ENCODE measurements at regions of chr7 and their contacts with region 1.

Region 1: GRCh38 chr7:85796956-85797355 is 610.1 kb upstream of the SEMA3D start:
- DNase-seq: no peak
- ATAC-seq: no peak
- H3K4me3 ChIP-seq: no peak overlapping the region
- H3K27ac ChIP-seq: no peak overlapping the region
- H3K4me1 ChIP-seq: no peaks in the 10 kb centered on the region
- H3K27me3 ChIP-seq: no peaks in the 10 kb centered on the region
- CTCF ChIP-seq: no peak

Region 2: DNA sequence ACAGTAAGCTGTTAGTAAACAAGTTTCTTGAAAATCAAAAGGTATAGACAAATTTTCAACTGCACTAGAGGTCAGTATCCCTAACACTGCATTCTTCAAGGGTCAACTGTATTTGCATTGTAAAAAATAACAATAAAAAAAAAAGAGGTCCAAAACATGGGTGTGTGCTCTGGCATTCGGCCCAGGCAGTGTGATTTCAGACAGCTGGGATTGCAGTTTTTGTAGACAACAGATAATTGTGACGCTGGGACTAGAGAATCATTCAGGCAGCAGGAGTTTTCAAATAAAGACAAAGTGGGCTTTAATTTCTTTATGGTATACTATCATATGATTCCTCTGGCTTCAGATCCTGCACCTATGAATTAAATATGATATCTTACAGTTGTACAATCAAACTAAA is 66.9 kb before region 1 on chr7:
- CTCF ChIA-PET with region 1: no interaction called
- POLR2A ChIA-PET with region 1: no interaction called
- in situ Hi-C with region 1: no loop called
- intact Hi-C with region 1: loop called (anchors 10 kb)
- DNase-seq: no peak
- ATAC-seq: no peak
- H3K4me3 ChIP-seq: no peak overlapping the region
- H3K27ac ChIP-seq: no peak overlapping the region
- H3K4me1 ChIP-seq: no peaks in the 10 kb centered on the region
- H3K27me3 ChIP-seq: no peaks in the 10 kb centered on the region
- CTCF ChIP-seq: no peak

Region 3: DNA sequence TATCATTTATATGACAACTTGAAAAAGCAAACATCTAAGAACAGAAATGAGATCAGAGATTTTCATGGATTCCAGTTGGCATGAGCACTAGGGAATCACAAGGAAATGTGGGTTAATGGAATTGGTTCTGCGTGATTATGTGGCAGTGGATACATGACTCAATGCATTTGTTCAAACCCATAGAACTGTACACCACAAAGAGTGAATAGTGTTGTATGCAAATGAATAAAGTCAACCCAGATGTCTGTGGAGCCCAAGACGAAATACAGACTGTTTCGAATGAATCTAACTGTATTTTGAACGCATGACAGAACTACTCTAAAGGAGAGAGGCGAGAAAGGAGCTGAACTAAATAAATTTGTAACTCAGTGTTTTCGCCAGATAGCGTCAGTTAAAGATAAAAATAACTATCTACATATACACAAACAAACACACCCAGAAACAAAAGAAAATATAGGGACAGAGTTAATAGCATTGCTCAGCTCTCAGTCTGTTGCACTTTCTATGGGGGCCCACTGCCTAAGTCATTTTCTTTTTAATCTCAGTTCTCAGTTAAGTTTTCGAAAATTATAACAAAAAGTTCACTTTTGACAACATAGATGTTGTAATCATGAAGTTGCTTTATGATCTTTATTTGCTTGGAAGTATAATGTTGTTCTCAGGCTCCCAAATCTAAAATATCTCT is 26.6 kb after region 1 on chr7:
- CTCF ChIA-PET with region 1: no interaction called
- POLR2A ChIA-PET with region 1: no interaction called
- in situ Hi-C with region 1: no loop called
- intact Hi-C with region 1: no loop called
- DNase-seq: no peak
- ATAC-seq: no peak
- H3K4me3 ChIP-seq: no peak overlapping the region
- H3K27ac ChIP-seq: no peak overlapping the region
- H3K4me1 ChIP-seq: no peaks in the 10 kb centered on the region
- H3K27me3 ChIP-seq: no peaks in the 10 kb centered on the region
- CTCF ChIP-seq: no peak

Region 4: GRCh38 chr7:87206361-87206760 is 1409.4 kb after region 1 on chr7:
- CTCF ChIA-PET with region 1: no interaction called
- POLR2A ChIA-PET with region 1: no interaction called
- in situ Hi-C with region 1: no loop called
- intact Hi-C with region 1: no loop called
- DNase-seq: no peak
- ATAC-seq: peak; percentile 62; the same call in 1 of the 2 replicates
- H3K4me3 ChIP-seq: no peak overlapping the region
- H3K27ac ChIP-seq: no peak overlapping the region
- H3K4me1 ChIP-seq: no peaks in the 10 kb centered on the region
- H3K27me3 ChIP-seq: no peaks in the 10 kb centered on the region
- CTCF ChIP-seq: no peak

Measured in Panc1 (cell line).